ENCODE measurements at regions of chr6 and their contacts with region 1.

Region 1: GRCh38 chr6:150891888-150892485 is 26.5 kb downstream of the MTHFD1L start:
- DNase-seq: peak; percentile 70
- ATAC-seq: peak; percentile 75
- H3K4me3 Mint-ChIP-seq: no peak overlapping the region
- H3K27ac Mint-ChIP-seq: no peak overlapping the region
- H3K4me1 Mint-ChIP-seq: peaks cover 28% of the 10 kb centered on the region
- H3K27me3 Mint-ChIP-seq: no peaks in the 10 kb centered on the region

Region 2: DNA sequence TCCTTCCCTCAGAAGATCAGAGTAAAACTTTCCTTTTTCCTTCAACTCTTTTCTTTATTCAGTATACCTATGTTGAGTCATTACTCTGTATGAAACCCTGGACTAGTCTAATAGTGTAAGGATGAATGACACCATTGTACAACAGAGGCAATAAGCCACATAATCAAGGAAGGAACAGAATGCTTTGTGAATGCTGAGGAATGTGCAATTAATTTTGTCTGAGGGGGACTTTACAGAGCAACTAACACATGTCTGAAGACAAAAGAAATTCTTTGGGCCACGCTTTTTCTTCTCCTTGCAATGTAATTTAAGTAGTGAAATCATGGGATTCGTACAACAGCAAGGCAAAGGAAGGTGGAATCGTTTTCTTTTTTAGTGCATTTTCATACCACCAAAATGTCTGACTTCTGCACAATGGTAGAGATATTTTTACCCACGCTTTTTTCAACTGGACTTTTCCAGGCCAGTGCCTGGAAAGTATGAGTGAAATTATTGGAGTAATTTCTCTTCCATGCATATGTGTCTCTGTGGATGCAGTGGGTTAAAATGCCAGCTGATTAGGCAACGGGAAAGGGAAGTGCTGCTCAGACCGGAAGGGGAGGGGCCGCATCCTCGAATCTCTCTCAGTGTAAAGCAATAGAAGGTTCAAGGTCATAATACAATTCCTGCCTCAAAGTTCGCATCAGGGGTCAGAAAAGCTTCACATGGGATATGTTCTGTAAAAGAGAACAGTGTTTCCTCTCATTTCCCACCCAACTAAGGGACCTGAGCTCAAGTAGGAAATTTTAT is 116.4 kb before region 1 on chr6:
- CTCF ChIA-PET with region 1: no interaction called
- POLR2A ChIA-PET with region 1: no interaction called
- DNase-seq: no peak
- ATAC-seq: no peak
- H3K4me3 Mint-ChIP-seq: no peak overlapping the region
- H3K27ac Mint-ChIP-seq: no peak overlapping the region
- H3K4me1 Mint-ChIP-seq: peaks cover 4% of the 10 kb centered on the region
- H3K27me3 Mint-ChIP-seq: peaks cover 2% of the 10 kb centered on the region

Region 3: GRCh38 chr6:150874179-150874578 is 17.8 kb before region 1 on chr6:
- CTCF ChIA-PET with region 1: interaction called, 12 read pairs
- POLR2A ChIA-PET with region 1: no interaction called
- DNase-seq: no peak
- ATAC-seq: no peak
- H3K4me3 Mint-ChIP-seq: no peak overlapping the region
- H3K27ac Mint-ChIP-seq: no peak overlapping the region
- H3K4me1 Mint-ChIP-seq: peaks cover 21% of the 10 kb centered on the region
- H3K27me3 Mint-ChIP-seq: no peaks in the 10 kb centered on the region

Region 4: DNA sequence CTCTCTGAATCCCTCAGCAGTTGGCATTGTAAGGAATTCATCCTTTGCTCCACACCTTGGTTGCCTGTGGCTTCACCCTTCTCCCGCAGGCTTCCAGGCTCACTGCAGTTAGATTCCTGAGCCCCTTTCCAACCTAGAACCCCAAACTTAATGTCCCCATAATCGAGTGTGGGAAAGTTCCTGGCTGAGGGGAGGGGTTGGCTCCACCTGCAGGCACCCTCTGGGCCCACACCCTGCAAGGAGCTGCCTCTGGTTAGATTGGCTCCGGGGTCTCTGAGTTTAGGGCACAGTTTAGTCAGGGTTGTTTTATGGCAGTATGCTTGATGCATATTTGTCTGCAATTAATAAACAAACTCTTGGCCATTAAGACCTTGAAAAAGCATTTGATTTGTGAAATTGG is 36.9 kb after region 1 on chr6:
- CTCF ChIA-PET with region 1: interaction called, 16 read pairs
- POLR2A ChIA-PET with region 1: no interaction called
- DNase-seq: no peak
- ATAC-seq: no peak
- H3K4me3 Mint-ChIP-seq: no peak overlapping the region
- H3K27ac Mint-ChIP-seq: no peak overlapping the region
- H3K4me1 Mint-ChIP-seq: no peaks in the 10 kb centered on the region
- H3K27me3 Mint-ChIP-seq: no peaks in the 10 kb centered on the region

Region 5: DNA sequence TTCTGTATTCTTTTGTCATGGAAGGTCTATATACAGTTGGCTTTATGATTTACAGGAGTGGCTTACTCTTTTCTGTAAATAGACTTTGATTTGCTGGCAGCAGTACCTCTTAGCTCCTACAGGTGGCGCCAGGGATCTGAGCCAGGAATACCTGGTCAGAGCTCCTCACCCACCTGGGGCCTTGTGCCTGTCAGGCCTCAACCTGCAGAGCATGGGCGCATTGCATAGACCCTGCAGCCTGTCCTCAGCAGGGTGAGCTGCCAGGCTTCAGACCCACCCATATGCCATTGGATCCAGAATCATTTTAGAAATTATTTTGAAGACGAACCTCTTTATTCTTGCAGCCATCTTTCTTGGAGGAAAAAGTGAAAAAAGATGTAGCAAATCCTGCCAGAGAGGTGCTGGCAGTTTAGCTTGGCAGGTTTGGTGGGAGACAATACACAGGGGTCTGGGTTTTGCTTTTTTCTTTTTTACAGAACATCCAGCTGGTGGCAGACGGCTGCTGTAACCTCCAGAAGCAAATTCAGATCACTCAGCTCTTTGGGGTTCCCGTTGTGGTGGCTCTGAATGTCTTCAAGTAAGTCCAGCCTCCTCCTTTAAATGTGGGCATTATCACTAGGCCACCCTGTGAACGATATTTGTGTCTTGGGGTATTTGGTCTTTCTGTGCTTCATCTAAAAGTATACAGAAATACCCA is 122.6 kb after region 1 on chr6:
- CTCF ChIA-PET with region 1: interaction called, 26 read pairs
- POLR2A ChIA-PET with region 1: no interaction called
- DNase-seq: peak; percentile 73
- ATAC-seq: peak; percentile 70
- H3K4me3 Mint-ChIP-seq: no peak overlapping the region
- H3K27ac Mint-ChIP-seq: no peak overlapping the region
- H3K4me1 Mint-ChIP-seq: peaks cover 2% of the 10 kb centered on the region
- H3K27me3 Mint-ChIP-seq: no peaks in the 10 kb centered on the region